ENCODE measurements at regions of chr1 and their contacts with region 1.

Region 1: GRCh38 chr1:183023601-183024316 is 539 bp downstream of the LAMC1 start:
- DNase-seq: peak; percentile 65
- ATAC-seq: peak; percentile 48
- H3K4me3 ChIP-seq: peak overlapping the region; percentile 88
- H3K27ac ChIP-seq: peak overlapping the region; percentile 100
- H3K4me1 ChIP-seq: peaks cover 53% of the 10 kb centered on the region
- H3K27me3 ChIP-seq: no peaks in the 10 kb centered on the region
- CTCF ChIP-seq: peak; percentile 58

Region 2: GRCh38 chr1:182888736-182889531 is 134.8 kb before region 1 on chr1:
- CTCF ChIA-PET with region 1: no interaction called
- POLR2A ChIA-PET with region 1: no interaction called
- intact Hi-C with region 1: no loop called
- DNase-seq: no peak
- ATAC-seq: no peak; the same call in 1 of the 2 replicates
- H3K4me3 ChIP-seq: no peak overlapping the region
- H3K27ac ChIP-seq: no peak overlapping the region
- H3K4me1 ChIP-seq: no peaks in the 10 kb centered on the region
- H3K27me3 ChIP-seq: no peaks in the 10 kb centered on the region
- CTCF ChIP-seq: no peak

Region 3: DNA sequence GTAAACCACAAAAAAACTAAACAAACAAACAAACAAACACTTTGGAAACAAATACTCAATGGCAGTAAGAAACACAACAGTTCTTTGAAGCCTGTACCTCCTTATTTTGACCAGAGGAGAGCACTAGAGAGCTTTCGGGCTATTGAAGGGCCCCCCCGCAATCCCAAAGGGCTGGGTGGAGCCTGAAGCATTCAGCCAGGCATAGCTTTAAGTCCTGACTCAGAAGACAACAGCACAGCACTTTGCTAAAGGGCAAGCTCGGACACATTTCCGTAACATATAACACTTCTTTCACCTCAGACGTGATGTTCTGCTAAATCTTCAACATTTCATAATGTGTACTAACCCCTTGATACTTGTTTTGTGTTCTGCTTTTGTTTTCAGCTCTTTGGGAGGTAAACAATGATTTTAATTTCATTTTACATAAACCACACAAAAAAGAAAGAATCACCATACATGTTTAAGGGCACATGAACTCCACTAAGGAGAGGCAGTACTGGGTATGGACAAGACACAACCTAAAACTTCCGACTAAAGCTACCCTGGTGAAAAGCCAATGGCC is 61.1 kb before region 1 on chr1:
- CTCF ChIA-PET with region 1: interaction called, 22 read pairs
- POLR2A ChIA-PET with region 1: interaction called, 6 read pairs
- intact Hi-C with region 1: loop called (anchors 1 kb)
- DNase-seq: peak; percentile 80
- ATAC-seq: peak; percentile 100
- H3K4me3 ChIP-seq: peak overlapping the region; percentile 60
- H3K27ac ChIP-seq: peak overlapping the region; percentile 43
- H3K4me1 ChIP-seq: peaks cover 5% of the 10 kb centered on the region
- H3K27me3 ChIP-seq: no peaks in the 10 kb centered on the region
- CTCF ChIP-seq: peak; percentile 90

Region 4: GRCh38 chr1:183061194-183061593 is 37.4 kb after region 1 on chr1:
- CTCF ChIA-PET with region 1: no interaction called
- POLR2A ChIA-PET with region 1: no interaction called
- intact Hi-C with region 1: loop called (anchors 2 kb)
- DNase-seq: no peak
- ATAC-seq: no peak
- H3K4me3 ChIP-seq: no peak overlapping the region
- H3K27ac ChIP-seq: peak overlapping the region; percentile 98
- H3K4me1 ChIP-seq: peaks cover 47% of the 10 kb centered on the region
- H3K27me3 ChIP-seq: no peaks in the 10 kb centered on the region
- CTCF ChIP-seq: no peak

Region 5: DNA sequence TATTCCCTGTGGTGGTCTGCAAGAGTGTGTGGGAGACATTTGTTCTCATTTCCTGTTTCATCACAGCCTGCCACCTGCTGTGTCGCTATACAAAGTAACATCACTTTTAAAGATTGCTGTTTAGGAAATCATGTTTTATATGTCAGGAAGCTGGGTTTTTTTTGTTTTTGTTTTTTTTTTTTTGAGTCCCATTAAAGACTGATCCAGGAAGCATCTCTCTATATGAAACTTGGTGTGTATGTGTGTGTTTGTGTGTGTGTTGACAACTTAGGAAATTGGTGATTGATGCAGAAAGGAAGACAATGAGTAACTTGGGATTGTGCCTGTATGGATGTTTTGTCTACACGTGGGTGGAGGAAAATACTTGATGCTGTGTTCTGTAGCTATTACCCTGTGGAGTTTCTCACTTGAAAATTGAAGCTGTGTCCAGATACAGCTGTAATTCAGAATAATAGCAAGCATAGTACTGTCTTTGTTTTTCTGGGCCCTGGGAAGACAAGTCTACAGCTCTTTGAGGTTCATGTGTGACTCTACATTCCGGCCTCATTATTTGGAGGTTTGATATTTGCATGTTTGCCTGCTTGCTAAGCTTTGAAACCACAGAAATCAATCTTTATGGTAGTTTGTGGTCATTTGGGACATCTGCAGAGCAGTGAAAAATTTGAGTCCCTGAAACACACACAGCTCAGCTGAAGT is 47.3 kb after region 1 on chr1:
- CTCF ChIA-PET with region 1: no interaction called
- POLR2A ChIA-PET with region 1: interaction called, 3 read pairs
- intact Hi-C with region 1: loop called (anchors 2 kb)
- DNase-seq: peak; percentile 69
- ATAC-seq: peak; percentile 43
- H3K4me3 ChIP-seq: 0 out of 2 replicates have a peak overlapping the region, but pooled peaks have one; percentile 26
- H3K27ac ChIP-seq: peak overlapping the region; percentile 96
- H3K4me1 ChIP-seq: peaks cover 46% of the 10 kb centered on the region
- H3K27me3 ChIP-seq: no peaks in the 10 kb centered on the region
- CTCF ChIP-seq: no peak

Region 6: GRCh38 chr1:183139281-183139942 is 115.7 kb after region 1 on chr1:
- CTCF ChIA-PET with region 1: no interaction called
- POLR2A ChIA-PET with region 1: no interaction called
- intact Hi-C with region 1: loop called (anchors 1 kb)
- DNase-seq: peak; percentile 85
- ATAC-seq: peak; percentile 87
- H3K4me3 ChIP-seq: peak overlapping the region; percentile 26; the same call in 1 of the 2 replicates
- H3K27ac ChIP-seq: peak overlapping the region; percentile 96
- H3K4me1 ChIP-seq: peaks cover 31% of the 10 kb centered on the region
- H3K27me3 ChIP-seq: no peaks in the 10 kb centered on the region
- CTCF ChIP-seq: no peak

Region 7: DNA sequence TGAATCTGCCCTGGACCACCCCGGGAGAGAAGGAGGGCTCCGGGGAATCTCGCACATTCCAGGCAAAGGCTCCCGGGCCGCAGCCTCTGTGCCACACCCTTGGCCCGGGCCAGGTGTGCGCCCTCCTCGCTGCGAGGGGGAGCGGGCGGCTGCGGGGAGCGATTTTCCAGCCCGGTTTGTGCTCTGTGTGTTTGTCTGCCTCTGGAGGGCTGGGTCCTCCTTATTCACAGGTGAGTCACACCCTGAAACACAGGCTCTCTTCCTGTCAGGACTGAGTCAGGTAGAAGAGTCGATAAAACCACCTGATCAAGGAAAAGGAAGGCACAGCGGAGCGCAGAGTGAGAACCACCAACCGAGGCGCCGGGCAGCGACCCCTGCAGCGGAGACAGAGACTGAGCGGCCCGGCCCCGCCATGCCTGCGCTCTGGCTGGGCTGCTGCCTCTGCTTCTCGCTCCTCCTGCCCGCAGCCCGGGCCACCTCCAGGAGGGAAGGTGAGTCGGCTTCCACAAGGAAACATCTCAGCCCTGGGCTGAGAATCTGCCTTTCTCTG is 162.3 kb after region 1 on chr1 and contains the start of gene LAMC2:
- CTCF ChIA-PET with region 1: no interaction called
- POLR2A ChIA-PET with region 1: no interaction called
- intact Hi-C with region 1: loop called (anchors 2 kb)
- DNase-seq: peak; percentile 93
- ATAC-seq: peak; percentile 96
- H3K4me3 ChIP-seq: peak within 1 kb of the TSS; percentile 86
- H3K27ac ChIP-seq: peak within 1 kb of the TSS; percentile 98
- H3K4me1 ChIP-seq: peaks cover 35% of the 10 kb centered on the region
- H3K27me3 ChIP-seq: no peaks in the 10 kb centered on the region
- CTCF ChIP-seq: peak; percentile 58
- total RNA-seq, gene LAMC2: 105 and 127 TPM in 2 replicates

Region 8: DNA sequence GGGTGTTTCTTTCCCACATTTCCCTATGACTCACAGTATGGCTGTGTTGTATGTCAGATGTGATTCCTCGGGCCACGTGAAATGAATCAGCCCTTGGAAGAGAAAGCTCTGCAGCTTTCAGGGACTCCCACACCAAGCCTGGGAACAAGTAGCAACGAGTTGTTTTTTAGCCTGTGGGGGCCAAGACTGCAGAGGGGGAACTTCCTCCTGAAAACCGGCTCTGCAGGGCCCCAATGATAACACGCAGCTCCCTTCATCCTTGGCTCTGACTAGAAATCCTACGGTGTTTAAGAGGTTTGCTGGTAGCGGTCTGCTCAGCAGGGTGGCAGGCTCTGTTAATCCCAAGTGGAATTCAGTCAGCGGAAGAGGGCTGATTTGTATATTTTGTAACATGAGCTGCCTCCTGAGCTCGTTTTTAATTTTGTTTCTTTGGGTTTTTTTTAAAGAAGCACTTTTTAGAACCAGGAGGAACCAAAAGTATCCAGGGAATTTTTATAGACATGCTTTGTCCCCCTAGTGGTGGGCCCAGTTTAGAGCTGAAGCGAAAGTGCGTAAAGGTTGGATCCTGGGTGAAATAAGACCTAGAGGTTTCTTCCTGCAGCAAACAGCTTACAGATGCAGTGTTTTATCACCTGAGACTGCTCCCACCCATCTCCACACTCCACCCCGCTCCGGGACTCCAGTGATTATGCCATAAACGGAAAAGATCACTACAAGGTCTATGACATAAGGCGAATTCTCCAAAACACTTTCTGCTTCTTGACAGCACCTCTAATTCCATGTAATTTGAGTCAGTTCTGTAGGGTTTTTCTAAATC is 211.1 kb after region 1 on chr1:
- CTCF ChIA-PET with region 1: interaction called, 3 read pairs
- POLR2A ChIA-PET with region 1: no interaction called
- intact Hi-C with region 1: loop called (anchors 2 kb)
- DNase-seq: peak; percentile 90
- ATAC-seq: peak; percentile 89
- H3K4me3 ChIP-seq: peak overlapping the region; percentile 54
- H3K27ac ChIP-seq: peak overlapping the region; percentile 99
- H3K4me1 ChIP-seq: peaks cover 42% of the 10 kb centered on the region
- H3K27me3 ChIP-seq: no peaks in the 10 kb centered on the region
- CTCF ChIP-seq: peak; percentile 76

Region 9: DNA sequence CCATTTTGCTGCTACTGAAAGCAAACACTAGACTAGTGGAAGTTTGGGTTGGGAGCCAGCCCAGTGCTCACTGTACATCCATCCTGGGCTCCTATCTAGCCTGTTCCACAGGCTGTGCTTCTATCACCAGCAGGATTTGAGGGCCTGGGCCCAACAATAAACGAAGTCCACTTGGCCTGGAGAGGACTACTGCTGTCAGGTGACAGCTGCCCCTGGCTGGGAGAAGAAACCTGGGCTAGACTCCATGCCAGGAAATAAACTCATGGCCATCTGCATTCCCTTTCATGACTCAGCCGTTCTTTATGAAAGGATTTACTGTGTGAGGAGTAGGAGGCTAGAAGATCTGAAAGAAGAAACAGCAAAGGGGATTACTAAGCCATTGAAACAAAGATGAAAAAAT is 978.3 kb after region 1 on chr1:
- CTCF ChIA-PET with region 1: no interaction called
- POLR2A ChIA-PET with region 1: no interaction called
- intact Hi-C with region 1: no loop called
- DNase-seq: peak; percentile 84
- ATAC-seq: peak; percentile 99
- H3K4me3 ChIP-seq: no peak overlapping the region
- H3K27ac ChIP-seq: peak overlapping the region; percentile 62
- H3K4me1 ChIP-seq: peaks cover 10% of the 10 kb centered on the region
- H3K27me3 ChIP-seq: no peaks in the 10 kb centered on the region
- CTCF ChIP-seq: no peak

Measured in PC-3 (cell line).